Calu3 (cell line): ENCODE measurements at regions of chr2 and their contacts with region 1.

Region 1: GRCh38 chr2:170361090-170361936 is 183.4 kb downstream of the MYO3B start:
- DNase-seq: peak; percentile 56
- H3K4me3 Mint-ChIP-seq: no peak overlapping the region
- H3K27ac Mint-ChIP-seq: no peak overlapping the region
- H3K4me1 Mint-ChIP-seq: peaks cover 10% of the 10 kb centered on the region
- H3K27me3 Mint-ChIP-seq: peaks cover 18% of the 10 kb centered on the region
- CTCF ChIP-seq: peak; percentile 65

Region 2: GRCh38 chr2:170235860-170236679 is 125.2 kb before region 1 on chr2:
- CTCF ChIA-PET with region 1: interaction called, 4 read pairs
- intact Hi-C with region 1: loop called (anchors 1 kb)
- DNase-seq: peak; percentile 45
- H3K4me3 Mint-ChIP-seq: no peak overlapping the region
- H3K27ac Mint-ChIP-seq: no peak overlapping the region
- H3K4me1 Mint-ChIP-seq: no peaks in the 10 kb centered on the region
- H3K27me3 Mint-ChIP-seq: no peaks in the 10 kb centered on the region
- CTCF ChIP-seq: peak; percentile 40

Region 3: GRCh38 chr2:170324640-170325046 is 36.7 kb before region 1 on chr2:
- CTCF ChIA-PET with region 1: interaction called, 8 read pairs
- intact Hi-C with region 1: loop called (anchors 2 kb)
- DNase-seq: peak; percentile 40
- H3K4me3 Mint-ChIP-seq: no peak overlapping the region
- H3K27ac Mint-ChIP-seq: no peak overlapping the region
- H3K4me1 Mint-ChIP-seq: peaks cover 1% of the 10 kb centered on the region
- H3K27me3 Mint-ChIP-seq: no peaks in the 10 kb centered on the region
- CTCF ChIP-seq: no peak

Region 4: DNA sequence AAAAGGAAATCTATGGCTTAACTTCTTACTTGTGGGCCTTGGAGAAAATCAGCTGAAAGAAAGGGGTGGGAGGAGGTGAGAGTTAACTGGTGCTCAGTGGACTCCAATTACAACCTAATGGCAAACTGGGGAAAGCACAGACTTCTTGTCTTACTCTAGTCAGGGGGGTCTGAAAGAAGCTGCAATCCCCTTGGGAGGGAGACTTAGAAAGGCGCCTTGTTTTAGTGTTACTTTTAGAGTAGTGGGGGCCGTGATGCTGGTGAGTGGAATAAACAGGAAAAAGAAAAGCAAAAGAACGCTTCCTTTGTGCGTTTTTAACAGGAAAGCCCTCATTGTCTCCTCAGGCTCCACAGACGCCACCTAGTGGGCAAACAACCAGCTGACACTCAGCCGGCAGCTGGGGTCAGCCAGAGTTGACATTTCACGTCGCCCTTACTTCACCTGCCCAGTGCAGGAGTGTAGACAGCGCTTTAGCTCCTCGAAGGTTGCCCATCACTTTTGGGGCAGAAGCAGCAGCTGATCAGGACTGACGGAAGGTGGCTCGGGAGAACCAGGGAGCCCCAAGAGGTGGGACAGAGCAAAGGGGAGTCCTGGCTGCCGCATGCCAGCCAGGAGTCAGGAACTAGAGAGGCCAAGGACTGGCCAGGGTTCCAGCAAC is 511.9 kb after region 1 on chr2:
- CTCF ChIA-PET with region 1: interaction called, 6 read pairs
- intact Hi-C with region 1: loop called (anchors 5 kb)
- DNase-seq: peak; percentile 85
- H3K4me3 Mint-ChIP-seq: peak overlapping the region; percentile 56
- H3K27ac Mint-ChIP-seq: peak overlapping the region; percentile 30
- H3K4me1 Mint-ChIP-seq: peaks cover 13% of the 10 kb centered on the region
- H3K27me3 Mint-ChIP-seq: no peaks in the 10 kb centered on the region
- CTCF ChIP-seq: peak; percentile 89